ENCODE measurements at regions of chr20 and their contacts with region 1.

Region 1: GRCh38 chr20:6333110-6333509 is 210.3 kb upstream of the FERMT1 start:
- DNase-seq: no peak
- ATAC-seq: no peak
- H3K4me3 ChIP-seq: no peak overlapping the region
- H3K27ac ChIP-seq: no peak overlapping the region
- H3K4me1 ChIP-seq: no peaks in the 10 kb centered on the region
- H3K27me3 ChIP-seq: no peaks in the 10 kb centered on the region

Region 2: DNA sequence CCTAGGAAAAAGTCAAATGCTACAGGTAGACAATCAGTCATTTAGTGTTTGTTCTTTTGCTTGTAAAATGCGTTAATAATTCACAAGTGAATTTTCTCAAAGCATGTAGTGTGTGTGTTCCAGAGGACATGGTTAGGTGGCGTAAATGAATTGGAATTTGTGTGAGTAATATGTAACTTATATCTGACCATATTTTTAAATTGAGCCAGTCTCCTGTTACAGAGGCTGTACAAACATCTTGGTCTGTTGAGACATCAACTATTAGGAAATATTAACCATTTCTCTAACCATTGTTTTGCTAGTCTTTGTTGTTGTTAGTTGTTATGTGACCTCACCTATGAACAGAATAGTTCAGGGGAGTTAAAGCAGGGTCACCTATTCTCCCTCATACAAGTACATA is 359.9 kb before region 1 on chr20:
- intact Hi-C with region 1: no loop called
- DNase-seq: no peak
- ATAC-seq: no peak
- H3K4me3 ChIP-seq: no peak overlapping the region
- H3K27ac ChIP-seq: no peak overlapping the region
- H3K4me1 ChIP-seq: no peaks in the 10 kb centered on the region
- H3K27me3 ChIP-seq: no peaks in the 10 kb centered on the region

Region 3: DNA sequence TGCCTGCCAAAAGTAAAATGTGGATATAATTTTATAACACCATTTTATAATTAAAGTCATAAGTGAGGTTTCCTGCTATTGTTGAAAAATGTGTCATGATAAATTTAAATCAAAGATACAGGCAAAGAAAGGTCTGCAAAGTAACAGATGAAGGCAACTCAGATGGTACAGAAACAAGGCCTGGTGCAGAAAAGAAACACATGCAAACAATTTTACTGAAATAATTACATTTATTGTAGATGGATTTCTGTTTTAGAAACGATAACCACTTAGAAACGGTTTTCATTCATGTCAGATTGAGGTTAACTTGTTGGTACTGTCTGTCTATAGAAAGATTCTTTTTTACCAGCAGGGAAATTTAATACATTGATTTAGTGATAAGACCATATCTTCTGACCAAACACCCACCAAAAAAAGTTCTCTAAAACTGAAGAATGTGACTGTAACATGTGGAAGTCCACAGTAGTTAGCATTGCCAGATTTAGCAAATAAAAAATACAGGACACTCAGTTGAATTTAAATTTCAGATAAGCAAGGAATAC is 104.7 kb before region 1 on chr20:
- intact Hi-C with region 1: no loop called
- DNase-seq: no peak
- ATAC-seq: no peak
- H3K4me3 ChIP-seq: no peak overlapping the region
- H3K27ac ChIP-seq: no peak overlapping the region
- H3K4me1 ChIP-seq: no peaks in the 10 kb centered on the region
- H3K27me3 ChIP-seq: no peaks in the 10 kb centered on the region

Region 4: GRCh38 chr20:6416371-6416770 is 83.3 kb after region 1 on chr20:
- intact Hi-C with region 1: no loop called
- DNase-seq: no peak
- ATAC-seq: no peak
- H3K4me3 ChIP-seq: no peak overlapping the region
- H3K27ac ChIP-seq: no peak overlapping the region
- H3K4me1 ChIP-seq: no peaks in the 10 kb centered on the region
- H3K27me3 ChIP-seq: no peaks in the 10 kb centered on the region

Region 5: DNA sequence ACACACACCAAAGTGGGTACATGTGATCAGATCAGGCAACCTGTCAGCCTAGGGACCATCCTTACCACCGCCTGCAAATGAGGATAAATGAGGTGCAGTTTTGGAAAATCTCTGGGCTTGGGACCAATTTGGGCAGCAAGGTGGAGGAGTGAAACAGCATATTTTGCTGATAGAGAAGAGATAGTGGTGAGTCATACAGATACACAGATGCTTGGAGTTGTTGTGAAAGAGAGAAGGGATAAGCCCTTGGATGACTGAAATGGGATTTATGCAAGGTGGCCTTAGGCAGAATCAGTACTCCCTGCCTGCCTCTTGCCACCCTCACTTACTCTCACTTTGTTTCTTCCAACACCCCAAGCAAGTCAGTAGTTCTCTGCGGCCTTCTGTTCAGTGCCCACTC is 469.1 kb after region 1 on chr20:
- intact Hi-C with region 1: loop called in 1 of 2 experiments (anchors 5 kb)
- DNase-seq: no peak
- ATAC-seq: no peak
- H3K4me3 ChIP-seq: no peak overlapping the region
- H3K27ac ChIP-seq: no peak overlapping the region
- H3K4me1 ChIP-seq: no peaks in the 10 kb centered on the region
- H3K27me3 ChIP-seq: no peaks in the 10 kb centered on the region